Ovary (tissue), 10 donors: ENCODE measurements at regions of chr17 and their contacts with region 1.

Region 1: GRCh38 chr17:64025732-64026294 is 5.4 kb upstream of the ICAM2 start:
- DNase-seq: peak; percentile 58 to 83 (median 72)
- H3K4me3 ChIP-seq: no peak overlapping the region
- H3K27ac ChIP-seq: no peak overlapping the region
- H3K4me1 ChIP-seq: peaks cover 7% of the 10 kb centered on the region
- H3K27me3 ChIP-seq: no peaks in the 10 kb centered on the region
- CTCF ChIP-seq: peak; percentile 64 to 73 (median 66)
- EP300 ChIP-seq: no peak
- POLR2A ChIP-seq: no peak

Region 2: DNA sequence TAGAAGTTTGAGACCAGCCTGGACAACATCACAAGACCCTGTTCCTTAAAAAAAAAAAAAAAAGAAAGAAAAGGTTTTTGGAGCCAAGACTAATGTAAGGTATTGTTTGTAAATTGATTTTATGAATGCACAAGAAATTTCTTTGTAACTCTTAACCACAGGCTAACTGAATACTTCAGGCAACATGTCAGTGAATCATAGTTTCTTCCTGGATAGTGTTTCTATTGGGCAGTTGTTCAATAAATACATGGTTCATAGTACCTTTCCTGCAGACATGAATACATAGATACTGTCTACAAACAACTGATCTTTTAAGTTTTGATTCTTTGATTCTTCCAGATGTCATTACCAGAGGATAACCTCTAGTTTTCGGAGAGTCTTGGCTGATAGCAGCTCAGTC is 240.3 kb before region 1 on chr17:
- intact Hi-C with region 1: no loop called
- DNase-seq: no peak
- H3K4me3 ChIP-seq: no peak overlapping the region
- H3K27ac ChIP-seq: no peak overlapping the region
- H3K4me1 ChIP-seq: peaks cover 1% of the 10 kb centered on the region
- H3K27me3 ChIP-seq: no peaks in the 10 kb centered on the region
- CTCF ChIP-seq: no peak
- EP300 ChIP-seq: no peak
- POLR2A ChIP-seq: no peak

Region 3: GRCh38 chr17:63919311-63919723 is 106.5 kb before region 1 on chr17:
- intact Hi-C with region 1: loop called in 2 of 4 experiments (anchors 10 kb)
- DNase-seq: peak; percentile 51 to 65 (median 63)
- H3K4me3 ChIP-seq: no peak overlapping the region
- H3K27ac ChIP-seq: no peak overlapping the region
- H3K4me1 ChIP-seq: peaks cover 2% of the 10 kb centered on the region
- H3K27me3 ChIP-seq: no peaks in the 10 kb centered on the region
- CTCF ChIP-seq: peak; percentile 67 to 87 (median 81)
- EP300 ChIP-seq: no peak
- POLR2A ChIP-seq: no peak

Region 4: DNA sequence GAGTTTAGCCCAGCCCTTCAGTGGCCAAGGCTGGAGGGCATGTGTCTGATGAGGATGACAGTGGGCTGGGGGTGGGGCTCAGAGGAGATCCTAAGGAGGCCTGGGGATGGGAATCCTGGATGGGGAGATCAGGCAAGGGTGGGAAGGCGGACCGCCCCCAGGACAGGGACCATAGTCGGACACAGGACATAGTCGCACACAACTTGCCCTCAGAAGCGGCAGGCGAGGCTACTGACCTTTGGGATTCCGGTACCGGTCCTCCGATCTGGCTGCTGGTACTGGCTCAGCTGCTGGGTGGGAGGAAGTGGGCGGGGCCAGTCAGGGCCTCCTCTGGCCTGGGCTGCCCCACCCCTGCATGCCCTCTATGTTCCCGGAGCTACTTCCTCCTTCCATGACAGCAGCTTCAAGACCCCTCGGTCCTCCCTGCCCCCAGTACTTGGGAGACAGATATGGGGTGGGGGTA is 94.7 kb before region 1 on chr17:
- intact Hi-C with region 1: loop called in 1 of 4 experiments (anchors 10 kb)
- DNase-seq: peak in 2 of 5 donors; percentile 42 to 58
- H3K4me3 ChIP-seq: no peak overlapping the region
- H3K27ac ChIP-seq: no peak overlapping the region
- H3K4me1 ChIP-seq: no peaks in the 10 kb centered on the region
- H3K27me3 ChIP-seq: no peaks in the 10 kb centered on the region
- CTCF ChIP-seq: no peak
- EP300 ChIP-seq: no peak
- POLR2A ChIP-seq: no peak